HEK293T (cell line): ENCODE measurements at regions of chr5 and their contacts with region 1.

Region 1: GRCh38 chr5:177351385-177352329 is at the start of gene LMAN2:
- DNase-seq: peak; percentile 97

Region 2: GRCh38 chr5:177198738-177199137 is 152.9 kb before region 1 on chr5:
- CTCF ChIA-PET with region 1: no interaction called
- POLR2A ChIA-PET with region 1: no interaction called
- DNase-seq: no peak

Region 3: DNA sequence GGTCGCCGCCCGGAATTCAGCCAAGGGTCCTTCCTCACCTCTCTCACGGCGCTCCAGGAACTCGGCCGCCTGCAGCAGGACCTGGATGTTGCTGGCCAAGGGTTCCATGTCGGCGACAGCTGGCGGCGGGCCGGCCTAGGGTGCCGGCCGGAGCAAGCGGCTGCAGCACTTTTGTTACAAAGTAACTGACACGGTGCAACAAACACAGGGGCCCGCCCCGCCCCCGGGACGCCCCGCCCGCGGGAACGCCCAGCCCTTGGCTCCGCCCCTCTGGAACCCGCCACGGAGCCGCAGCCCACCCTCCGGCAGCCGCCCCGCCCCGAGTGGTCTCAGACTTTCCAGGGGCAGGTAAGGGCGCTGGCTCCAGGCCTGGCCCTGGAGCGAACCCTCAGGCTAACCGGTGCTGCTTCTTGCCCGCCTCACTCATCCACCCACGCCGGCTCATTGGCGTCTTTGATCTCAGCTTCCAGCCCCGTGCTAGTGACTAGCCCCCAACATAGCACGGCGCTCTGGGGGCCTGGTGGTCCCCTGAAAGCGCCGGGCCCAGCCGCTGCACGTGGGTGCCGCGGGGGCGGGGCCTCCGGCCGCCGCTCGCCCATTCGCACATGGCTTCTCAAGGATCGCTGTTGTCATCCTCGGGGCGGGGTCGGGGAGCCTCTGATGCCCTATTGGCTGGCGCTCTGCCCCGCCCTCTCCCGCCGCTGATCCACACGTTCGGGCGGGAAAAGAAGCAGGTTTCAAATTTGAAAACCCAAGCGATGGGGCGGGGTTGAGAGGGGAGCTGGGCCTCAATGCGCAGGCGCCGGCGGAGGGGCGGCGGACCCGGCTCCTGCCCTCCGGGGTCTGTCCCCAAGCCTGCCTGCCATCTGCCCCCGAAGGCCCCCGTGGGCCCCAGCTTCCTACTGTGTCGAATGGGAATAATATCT is 39.7 kb before region 1 on chr5 and contains the start of gene MXD3:
- CTCF ChIA-PET with region 1: interaction called, 5 read pairs
- POLR2A ChIA-PET with region 1: interaction called, 13 read pairs
- DNase-seq: peak; percentile 98

Region 4: DNA sequence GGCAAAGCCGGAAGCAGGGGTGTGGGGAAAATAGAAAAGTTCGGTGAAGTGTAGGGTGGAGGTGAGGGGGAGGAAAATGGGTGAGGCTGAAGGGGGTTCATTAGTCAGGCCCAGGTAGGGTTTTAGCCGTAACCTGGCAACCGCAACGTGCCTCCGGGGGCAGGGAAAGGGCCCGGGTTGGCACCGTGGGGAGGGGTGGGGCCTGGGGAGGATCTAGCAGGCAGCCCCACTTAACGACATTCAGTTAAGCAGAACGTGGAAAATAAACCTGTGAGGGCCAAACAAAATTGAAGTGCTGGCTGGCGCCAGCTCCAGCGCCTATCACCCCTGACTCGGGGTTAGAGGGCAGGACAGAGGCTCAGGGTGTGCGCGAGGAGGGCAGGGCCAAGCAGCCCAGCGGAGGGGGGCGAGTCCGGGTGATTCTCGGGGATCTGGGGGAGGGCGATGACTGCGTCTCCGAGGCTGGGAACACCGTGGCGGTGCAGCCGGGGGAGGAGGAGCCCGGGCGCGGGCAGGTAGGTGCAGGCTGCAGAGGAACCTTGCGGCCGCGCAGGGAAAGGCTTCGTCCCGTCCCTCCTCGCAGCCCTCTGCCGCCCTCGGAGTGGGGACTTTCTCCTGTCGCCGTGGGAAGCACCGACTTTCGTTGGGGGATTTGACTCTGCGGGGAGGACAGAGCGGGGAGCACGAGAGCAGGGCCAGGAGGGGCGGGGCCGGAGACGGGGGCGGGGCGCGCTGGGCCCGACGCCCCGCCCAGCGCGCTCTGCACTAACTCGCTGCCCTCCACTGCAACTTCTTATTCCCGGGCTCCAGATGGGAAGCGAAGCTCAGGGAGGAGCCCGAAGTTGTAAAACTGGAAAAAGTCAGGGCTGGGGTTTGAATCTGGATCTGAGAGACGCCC is 11.2 kb after region 1 on chr5:
- CTCF ChIA-PET with region 1: interaction called, 4 read pairs
- POLR2A ChIA-PET with region 1: interaction called, 42 read pairs
- DNase-seq: peak; percentile 86

Region 5: GRCh38 chr5:177370488-177371119 is 18.9 kb after region 1 on chr5:
- CTCF ChIA-PET with region 1: interaction called, 5 read pairs
- POLR2A ChIA-PET with region 1: interaction called, 38 read pairs
- DNase-seq: peak; percentile 97

Region 6: GRCh38 chr5:177399997-177400868 is 48.6 kb after region 1 on chr5 and contains the start of gene PFN3:
- CTCF ChIA-PET with region 1: no interaction called
- POLR2A ChIA-PET with region 1: no interaction called
- DNase-seq: no peak

Region 7: DNA sequence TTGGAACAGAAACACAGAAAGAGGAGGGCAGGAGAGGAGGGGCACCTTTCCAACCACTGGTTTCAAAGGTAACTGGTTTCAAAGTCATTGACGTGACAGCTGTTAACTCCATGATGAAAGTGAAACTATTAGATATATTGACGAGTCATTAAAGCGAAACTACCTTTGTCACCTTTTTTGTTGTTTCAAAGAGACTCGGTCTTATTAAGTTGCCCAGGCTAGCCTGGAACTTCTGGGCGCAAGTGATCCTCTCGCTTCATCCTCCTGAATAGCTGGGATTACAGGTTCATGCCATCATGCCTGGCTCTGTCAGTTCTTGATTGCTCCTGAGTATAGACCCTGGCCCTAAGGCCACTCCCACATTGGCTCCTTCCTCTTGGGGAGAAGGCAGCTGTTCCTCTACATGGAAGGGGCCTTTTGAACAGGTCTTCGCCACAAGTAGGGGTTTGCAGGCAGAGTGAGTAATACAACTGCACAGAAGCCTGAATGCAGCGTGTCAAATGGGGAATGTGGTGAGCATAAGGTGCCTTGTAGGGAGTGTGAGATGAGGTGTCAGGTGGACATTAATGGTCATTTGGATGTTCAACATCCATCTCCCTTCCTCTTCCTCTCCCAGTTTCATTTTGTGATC is 61.1 kb after region 1 on chr5:
- CTCF ChIA-PET with region 1: no interaction called
- POLR2A ChIA-PET with region 1: no interaction called
- DNase-seq: no peak